ENCODE measurements at regions of chr2 and their contacts with region 1.

Region 1: GRCh38 chr2:141728886-141729285 is 401.9 kb downstream of the LRP1B start:
- DNase-seq: no peak
- H3K4me3 ChIP-seq: no peak overlapping the region
- H3K27ac ChIP-seq: no peak overlapping the region
- H3K27me3 ChIP-seq: no peaks in the 10 kb centered on the region
- CTCF ChIP-seq: no peak

Region 2: DNA sequence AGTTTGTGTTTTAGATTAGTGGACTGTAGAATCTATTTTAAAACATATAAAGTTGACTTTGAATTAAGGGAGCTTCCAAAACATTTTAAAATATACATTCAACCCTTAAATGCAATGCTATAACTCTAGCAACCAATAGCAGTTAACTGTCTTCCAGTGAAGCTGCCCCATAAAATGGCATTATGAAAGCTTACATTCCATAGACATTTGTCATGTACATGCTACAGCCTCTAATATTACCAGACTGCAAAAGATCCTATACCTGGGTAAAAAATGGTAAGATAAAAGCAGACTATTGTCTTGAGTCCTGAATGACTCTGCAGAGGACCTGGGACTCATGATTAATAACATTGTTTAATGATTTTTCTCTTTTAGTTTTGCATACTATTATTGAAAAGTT is 87.4 kb before region 1 on chr2:
- CTCF ChIA-PET with region 1: no interaction called
- POLR2A ChIA-PET with region 1: interaction called, 10 read pairs
- DNase-seq: no peak
- H3K4me3 ChIP-seq: no peak overlapping the region
- H3K27ac ChIP-seq: no peak overlapping the region
- H3K27me3 ChIP-seq: no peaks in the 10 kb centered on the region
- CTCF ChIP-seq: no peak

Region 3: DNA sequence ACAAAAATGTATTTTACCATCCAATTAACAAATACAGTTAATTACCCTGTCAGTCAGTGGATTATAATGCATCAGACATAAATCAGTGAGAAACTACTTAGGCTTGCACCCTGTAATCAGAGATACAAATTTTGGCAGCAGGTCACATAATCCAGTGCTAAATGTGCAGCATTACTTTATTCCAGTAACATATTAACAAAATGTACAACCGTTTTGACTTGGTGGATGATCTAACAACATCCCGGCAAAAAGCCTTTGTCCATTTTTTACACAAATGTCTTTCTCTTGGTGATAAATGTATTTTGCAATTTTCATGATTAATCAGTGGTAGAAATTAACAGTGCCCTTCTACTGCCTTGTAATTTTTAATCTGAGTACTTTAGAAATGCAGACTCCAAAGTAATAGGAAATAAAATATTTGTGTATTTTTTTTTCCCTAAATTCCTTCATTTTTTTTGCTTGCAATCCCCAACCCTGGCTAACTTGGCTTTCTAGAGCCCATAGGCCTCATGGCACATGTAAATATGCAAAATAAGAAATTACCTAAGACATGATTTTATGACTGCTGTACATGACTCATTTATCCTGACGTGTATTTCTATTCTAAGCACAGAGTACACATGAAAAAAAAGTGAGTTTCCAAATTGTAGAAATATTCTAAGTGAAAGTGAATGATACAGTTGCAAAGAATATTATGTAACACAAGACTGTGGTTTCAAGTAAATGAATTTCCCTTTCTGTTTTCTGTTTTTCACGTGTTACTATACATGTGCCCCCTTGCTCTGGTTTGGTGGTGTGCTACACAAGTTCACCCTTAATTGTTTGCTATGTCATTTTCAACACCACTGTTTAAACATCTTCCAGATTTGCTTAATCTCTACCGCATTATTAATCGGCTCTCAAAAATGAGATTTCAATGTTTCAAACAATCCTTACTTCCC is 239.4 kb after region 1 on chr2:
- CTCF ChIA-PET with region 1: no interaction called
- POLR2A ChIA-PET with region 1: no interaction called
- DNase-seq: no peak
- H3K4me3 ChIP-seq: no peak overlapping the region
- H3K27ac ChIP-seq: no peak overlapping the region
- H3K27me3 ChIP-seq: no peaks in the 10 kb centered on the region
- CTCF ChIP-seq: no peak

Region 4: DNA sequence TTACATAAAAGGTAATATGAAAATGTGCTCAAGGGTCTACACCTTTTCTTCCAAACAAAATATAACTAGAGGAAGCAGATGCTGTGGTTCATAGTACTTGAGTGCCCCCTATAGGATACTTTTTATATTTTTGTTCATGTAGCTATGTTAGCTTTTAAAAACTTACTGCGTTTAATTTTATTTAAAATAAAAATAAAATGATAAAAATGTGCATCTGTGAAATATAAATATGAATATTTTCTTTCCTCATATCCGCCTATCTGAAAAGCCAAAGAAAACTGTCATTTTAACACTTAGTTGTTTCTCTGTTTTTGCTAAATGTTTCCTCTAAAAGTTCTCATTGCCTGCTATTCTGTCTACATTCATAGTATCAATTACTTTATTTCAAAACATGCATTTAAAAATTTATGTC is 411.6 kb after region 1 on chr2:
- CTCF ChIA-PET with region 1: no interaction called
- POLR2A ChIA-PET with region 1: no interaction called
- DNase-seq: no peak
- H3K4me3 ChIP-seq: no peak overlapping the region
- H3K27ac ChIP-seq: no peak overlapping the region
- H3K27me3 ChIP-seq: no peaks in the 10 kb centered on the region
- CTCF ChIP-seq: peak; percentile 58

Measured in AG04450 (cell line).